Esophagus muscularis mucosa (tissue), 4 donors: ENCODE measurements at regions of chr7 and their contacts with region 1.

Region 1: DNA sequence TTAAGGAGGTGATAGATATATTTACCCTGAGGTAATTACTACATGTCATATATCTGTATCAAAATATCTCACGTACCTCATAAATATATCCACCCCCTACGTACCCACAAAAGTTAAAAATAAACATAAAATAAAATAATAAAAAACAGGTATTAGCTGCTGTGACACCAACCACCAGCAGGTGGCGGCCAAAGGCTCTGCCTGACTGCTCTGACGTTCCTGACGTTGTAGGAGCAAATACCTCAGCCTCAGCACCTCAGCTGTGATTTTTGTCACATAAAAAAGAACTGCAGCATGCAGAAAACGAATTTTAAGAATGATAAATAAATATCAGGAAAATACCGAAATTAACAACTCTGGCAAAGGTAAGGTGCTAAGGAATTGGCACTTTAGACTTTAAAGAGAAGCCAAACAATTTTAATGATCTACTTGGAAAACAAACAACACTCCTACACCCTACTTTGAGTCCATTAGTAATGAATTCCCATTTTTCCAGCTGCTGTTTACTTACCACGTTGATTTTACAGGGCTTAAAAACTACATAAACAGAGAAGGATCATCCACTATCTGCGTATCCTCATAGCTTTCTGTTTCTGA is 125.4 kb upstream of the TARP start:
- DNase-seq: no peak
- H3K4me3 ChIP-seq: no peak overlapping the region
- H3K27ac ChIP-seq: no peak overlapping the region
- H3K4me1 ChIP-seq: peaks cover 0 to 4% (median 2%) of the 10 kb centered on the region in 4 donors
- H3K27me3 ChIP-seq: no peaks in the 10 kb centered on the region
- CTCF ChIP-seq: peak; percentile 71 to 88 (median 76)
- EP300 ChIP-seq: no peak
- POLR2A ChIP-seq: no peak

Region 2: GRCh38 chr7:38215735-38216670 is 182.8 kb before region 1 on chr7:
- intact Hi-C with region 1: no loop called
- DNase-seq: peak; percentile 94
- H3K4me3 ChIP-seq: no peak overlapping the region
- H3K27ac ChIP-seq: peak overlapping the region in 3 of 4 donors; percentile 15 to 40 (median 16)
- H3K4me1 ChIP-seq: peaks cover 15 to 49% (median 39%) of the 10 kb centered on the region in 4 donors
- H3K27me3 ChIP-seq: no peaks in the 10 kb centered on the region
- CTCF ChIP-seq: peak in 2 of 3 experiments; percentile 83 to 84
- EP300 ChIP-seq: no peak
- POLR2A ChIP-seq: no peak

Region 3: GRCh38 chr7:38248069-38248567 is 150.7 kb before region 1 on chr7:
- intact Hi-C with region 1: no loop called
- DNase-seq: no peak
- H3K4me3 ChIP-seq: no peak overlapping the region
- H3K27ac ChIP-seq: no peak overlapping the region
- H3K4me1 ChIP-seq: peaks cover 0 to 6% (median 0%) of the 10 kb centered on the region in 4 donors
- H3K27me3 ChIP-seq: no peaks in the 10 kb centered on the region
- CTCF ChIP-seq: no peak
- EP300 ChIP-seq: no peak
- POLR2A ChIP-seq: no peak

Region 4: DNA sequence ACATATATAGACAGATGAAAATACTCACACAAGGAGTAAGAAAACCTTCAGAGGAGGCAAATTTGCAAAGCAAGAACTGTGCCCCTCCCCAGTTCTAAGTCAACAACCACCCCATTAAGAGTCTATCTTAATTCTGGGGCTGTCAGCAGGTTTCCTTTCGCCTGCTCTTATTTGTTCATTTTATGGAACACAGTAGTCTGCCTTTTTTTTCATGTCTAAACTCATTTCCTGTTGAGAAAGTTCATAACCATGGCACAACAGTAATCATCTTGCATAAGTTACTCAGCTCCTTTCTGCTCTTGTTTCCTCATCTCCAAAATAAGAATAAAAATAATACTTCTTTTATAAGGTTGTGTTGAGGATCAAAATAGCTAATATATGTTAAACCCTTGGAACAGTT is 258.1 kb after region 1 on chr7:
- intact Hi-C with region 1: loop called (anchors 5 kb)
- DNase-seq: no peak
- H3K4me3 ChIP-seq: no peak overlapping the region
- H3K27ac ChIP-seq: no peak overlapping the region
- H3K4me1 ChIP-seq: no peaks in the 10 kb centered on the region
- H3K27me3 ChIP-seq: no peaks in the 10 kb centered on the region
- CTCF ChIP-seq: no peak
- EP300 ChIP-seq: no peak
- POLR2A ChIP-seq: no peak

Region 5: GRCh38 chr7:38748056-38748611 is 349.3 kb after region 1 on chr7:
- intact Hi-C with region 1: loop called (anchors 10 kb)
- DNase-seq: no peak
- H3K4me3 ChIP-seq: no peak overlapping the region
- H3K27ac ChIP-seq: no peak overlapping the region
- H3K4me1 ChIP-seq: no peaks in the 10 kb centered on the region
- H3K27me3 ChIP-seq: no peaks in the 10 kb centered on the region
- CTCF ChIP-seq: peak; percentile 19 to 27 (median 24)
- EP300 ChIP-seq: no peak
- POLR2A ChIP-seq: no peak